Upper lobe of right lung (tissue), 1 donor: ENCODE measurements at regions of chr16 and their contacts with region 1.

Region 1: DNA sequence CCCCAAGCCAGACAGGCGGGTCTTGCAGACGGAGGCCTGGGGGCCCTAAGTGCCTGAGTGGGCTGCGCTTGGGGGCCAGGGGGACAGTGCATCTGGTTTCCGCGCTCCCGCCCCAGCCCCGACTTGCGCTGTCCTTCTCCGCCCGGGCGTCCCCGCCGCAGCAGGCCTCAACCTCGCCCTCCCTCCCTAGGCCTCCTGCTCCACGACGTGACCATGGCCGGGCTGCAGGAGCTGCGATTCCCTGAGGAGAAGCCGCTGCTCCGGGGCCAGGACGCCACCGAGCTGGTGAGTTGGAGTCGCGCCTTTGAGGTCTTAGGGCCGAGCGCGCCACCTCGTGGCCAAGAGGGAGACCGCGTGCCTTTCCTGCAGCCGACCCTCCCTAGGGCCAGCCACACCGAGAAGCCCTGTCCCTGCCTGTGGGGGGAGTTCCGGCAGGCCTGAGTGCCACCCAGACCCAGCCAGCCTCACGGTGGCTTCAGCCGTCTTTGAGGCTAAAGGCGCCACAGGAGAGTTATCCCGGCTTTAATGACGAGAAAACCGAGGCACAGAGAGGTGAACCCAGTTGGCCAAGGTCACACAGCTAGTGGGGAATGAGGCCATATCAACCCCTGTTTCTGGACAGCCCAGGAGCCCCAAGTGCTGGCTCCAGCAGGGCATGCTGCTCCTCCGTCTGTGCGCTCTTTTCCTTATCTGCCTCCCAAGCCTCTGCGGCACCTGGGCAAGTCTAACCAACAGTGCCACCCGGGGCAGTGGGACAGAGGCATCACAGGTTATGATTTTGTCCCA is 12.2 kb upstream of the NDRG4 start:
- DNase-seq: peak; percentile 91
- ATAC-seq: peak; percentile 96
- H3K4me3 ChIP-seq: no peak overlapping the region
- H3K27ac ChIP-seq: no peak overlapping the region
- H3K4me1 ChIP-seq: no peaks in the 10 kb centered on the region
- H3K27me3 ChIP-seq: no peaks in the 10 kb centered on the region
- CTCF ChIP-seq: peak; percentile 91

Region 2: DNA sequence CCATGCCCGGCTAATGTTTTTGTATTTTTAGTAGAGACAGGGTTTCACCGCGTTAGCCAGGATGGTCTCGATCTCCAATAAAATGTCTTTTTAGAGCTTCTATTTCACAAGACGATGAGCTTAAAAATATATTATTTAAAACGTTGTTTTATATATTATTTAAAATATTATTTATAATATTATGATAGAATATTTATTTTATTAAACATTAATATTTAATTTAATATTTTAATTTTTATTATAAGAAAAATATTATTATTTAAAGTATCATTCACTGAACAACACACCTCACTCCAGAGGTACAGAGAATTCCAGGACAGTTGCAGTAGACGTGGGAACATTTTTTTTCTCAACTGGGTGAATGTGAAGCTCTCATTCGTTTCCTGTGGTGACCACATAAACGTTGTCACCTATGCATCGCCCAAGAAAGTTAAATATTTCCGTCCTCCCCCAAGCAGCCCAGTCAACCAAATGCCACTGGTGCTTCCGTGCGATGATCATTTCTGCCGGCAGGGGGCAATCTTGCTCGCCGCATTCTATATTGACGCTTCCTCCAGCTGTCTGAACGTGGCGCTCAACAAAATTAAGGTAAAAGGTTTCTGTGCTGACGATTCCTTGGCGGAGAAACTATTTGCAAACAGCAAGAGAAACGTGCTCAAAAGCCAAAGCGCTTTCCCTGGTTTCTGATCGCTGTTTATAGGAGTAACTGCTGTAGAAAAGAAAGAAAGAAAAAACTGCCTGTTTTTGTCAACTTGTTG is 151.2 kb before region 1 on chr16:
- intact Hi-C with region 1: loop called (anchors 5 kb)
- DNase-seq: peak; percentile 86
- ATAC-seq: peak; percentile 90
- H3K4me3 ChIP-seq: peak overlapping the region; percentile 38
- H3K27ac ChIP-seq: no peak overlapping the region
- H3K4me1 ChIP-seq: peaks cover 4% of the 10 kb centered on the region
- H3K27me3 ChIP-seq: no peaks in the 10 kb centered on the region
- CTCF ChIP-seq: peak; percentile 95